ENCODE measurements at regions of chr9 and their contacts with region 1.

Region 1: GRCh38 chr9:72428329-72428728 is 63.3 kb upstream of the ZFAND5 start:
- DNase-seq: peak; percentile 16
- H3K4me3 ChIP-seq: no peak overlapping the region
- H3K27ac ChIP-seq: no peak overlapping the region
- H3K4me1 ChIP-seq: peaks cover 15% of the 10 kb centered on the region
- H3K27me3 ChIP-seq: no peaks in the 10 kb centered on the region
- CTCF ChIP-seq: no peak

Region 2: GRCh38 chr9:72383978-72384709 is 44.2 kb before region 1 on chr9:
- CTCF ChIA-PET with region 1: no interaction called
- dilution Hi-C with region 1: loop called (anchors 5 kb)
- in situ Hi-C with region 1: no loop called
- intact Hi-C with region 1: no loop called
- DNase-seq: peak; percentile 87
- H3K4me3 ChIP-seq: no peak overlapping the region
- H3K27ac ChIP-seq: peak overlapping the region; percentile 17
- H3K4me1 ChIP-seq: peaks cover 7% of the 10 kb centered on the region
- H3K27me3 ChIP-seq: no peaks in the 10 kb centered on the region
- CTCF ChIP-seq: no peak

Region 3: GRCh38 chr9:72485821-72486593 is 57.7 kb after region 1 on chr9:
- CTCF ChIA-PET with region 1: no interaction called
- dilution Hi-C with region 1: loop called (anchors 10 kb)
- in situ Hi-C with region 1: no loop called
- intact Hi-C with region 1: no loop called
- DNase-seq: no peak
- H3K4me3 ChIP-seq: no peak overlapping the region
- H3K27ac ChIP-seq: no peak overlapping the region
- H3K4me1 ChIP-seq: peaks cover 8% of the 10 kb centered on the region
- H3K27me3 ChIP-seq: no peaks in the 10 kb centered on the region
- CTCF ChIP-seq: no peak

Region 4: DNA sequence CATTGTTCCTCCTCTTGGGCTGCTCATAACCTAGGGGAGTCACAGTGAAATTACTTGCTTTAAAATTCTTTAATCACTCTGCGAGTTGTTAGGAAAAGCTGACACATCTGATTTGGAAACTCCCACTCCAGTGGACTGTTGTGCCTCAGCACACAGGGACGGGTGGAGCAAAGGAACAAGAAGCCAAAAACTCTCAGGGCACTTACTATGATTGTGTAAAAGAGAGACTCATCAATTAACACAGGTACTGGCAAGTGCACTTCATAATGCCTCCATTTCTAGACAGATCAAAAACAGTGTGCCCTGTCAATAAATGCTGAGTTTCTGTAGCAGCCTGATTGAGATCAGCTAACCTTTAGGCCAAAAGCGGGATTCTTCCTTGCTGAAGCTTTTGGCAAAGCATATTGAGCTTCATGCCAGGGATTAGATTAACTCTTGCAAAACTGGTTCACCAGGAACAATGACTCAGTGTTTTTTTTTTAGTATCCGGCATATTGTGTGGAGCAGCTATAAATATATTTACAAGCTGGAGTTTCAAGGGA is 149.0 kb after region 1 on chr9:
- CTCF ChIA-PET with region 1: no interaction called
- dilution Hi-C with region 1: no loop called
- in situ Hi-C with region 1: no loop called
- intact Hi-C with region 1: no loop called
- DNase-seq: peak; percentile 93
- H3K4me3 ChIP-seq: peak overlapping the region in 1 of 3 experiments; percentile 6
- H3K27ac ChIP-seq: peak overlapping the region; percentile 66
- H3K4me1 ChIP-seq: peaks cover 52% of the 10 kb centered on the region
- H3K27me3 ChIP-seq: no peaks in the 10 kb centered on the region
- CTCF ChIP-seq: no peak

Measured in mammary epithelial cell (primary cell).